Caco-2 (cell line): ENCODE measurements at regions of chr11 and their contacts with region 1.

Region 1: GRCh38 chr11:71563401-71563800 is 2.0 kb upstream of the KRTAP5-10 start:
- DNase-seq: peak; percentile 74 to 76
- H3K4me3 ChIP-seq: no peak overlapping the region
- H3K4me3 Mint-ChIP-seq: no peak overlapping the region
- H3K27ac Mint-ChIP-seq: no peak overlapping the region
- H3K4me1 ChIP-seq: no peaks in the 10 kb centered on the region
- H3K4me1 Mint-ChIP-seq: peaks cover 7% of the 10 kb centered on the region
- H3K27me3 ChIP-seq: no peaks in the 10 kb centered on the region
- H3K27me3 Mint-ChIP-seq: peaks cover 20% of the 10 kb centered on the region
- CTCF ChIP-seq: peak; percentile 81

Region 2: GRCh38 chr11:71425855-71426254 is 137.5 kb before region 1 on chr11:
- CTCF ChIA-PET with region 1: interaction called, 10 read pairs
- POLR2A ChIA-PET with region 1: no interaction called
- intact Hi-C with region 1: no loop called
- DNase-seq: no peak
- H3K4me3 ChIP-seq: no peak overlapping the region
- H3K4me3 Mint-ChIP-seq: no peak overlapping the region
- H3K27ac Mint-ChIP-seq: no peak overlapping the region
- H3K4me1 ChIP-seq: no peaks in the 10 kb centered on the region
- H3K4me1 Mint-ChIP-seq: no peaks in the 10 kb centered on the region
- H3K27me3 ChIP-seq: no peaks in the 10 kb centered on the region
- H3K27me3 Mint-ChIP-seq: peaks cover 3% of the 10 kb centered on the region
- CTCF ChIP-seq: no peak

Region 3: DNA sequence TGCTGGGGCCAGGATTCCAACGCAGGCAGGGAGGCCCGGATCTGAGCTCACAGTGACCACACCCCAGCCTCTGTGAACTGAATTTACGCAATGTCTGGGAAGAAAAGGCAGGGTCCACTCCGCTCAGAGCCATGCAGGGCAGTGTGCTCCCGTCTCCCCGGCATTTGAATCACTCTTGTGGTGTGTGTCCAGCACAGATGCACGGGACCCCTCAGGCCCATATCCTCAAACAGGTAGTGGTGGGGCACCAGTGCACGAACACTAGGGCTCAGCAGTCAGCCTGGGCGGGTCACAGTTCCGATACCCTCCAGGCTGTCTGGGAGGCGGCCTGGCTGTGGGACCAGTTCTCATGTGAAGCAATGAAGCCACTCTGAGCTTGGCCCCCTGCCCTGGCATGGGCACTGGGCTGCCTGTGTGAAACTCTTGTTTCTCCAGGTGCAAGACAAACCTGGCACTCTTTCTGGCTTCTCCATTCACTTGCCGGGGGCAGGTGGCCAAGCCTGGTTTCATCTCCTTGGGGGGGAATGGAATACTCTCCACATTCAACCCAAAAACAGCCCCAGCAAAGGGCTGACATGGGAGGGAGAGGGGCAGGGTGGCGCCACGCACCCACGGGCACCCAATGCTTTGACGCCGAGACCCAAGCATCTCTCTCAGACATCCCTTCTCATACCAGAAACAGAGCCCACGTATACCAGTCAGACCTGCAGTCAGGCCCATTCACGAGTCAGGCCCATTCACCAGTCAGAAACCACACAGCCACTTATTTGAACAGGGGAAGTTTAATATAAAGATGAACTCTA is 129.6 kb before region 1 on chr11:
- CTCF ChIA-PET with region 1: interaction called, 12 read pairs
- POLR2A ChIA-PET with region 1: no interaction called
- intact Hi-C with region 1: no loop called
- DNase-seq: peak; percentile 72 to 80
- H3K4me3 ChIP-seq: no peak overlapping the region
- H3K4me3 Mint-ChIP-seq: no peak overlapping the region
- H3K27ac Mint-ChIP-seq: peak overlapping the region; percentile 9
- H3K4me1 ChIP-seq: peaks cover 13% of the 10 kb centered on the region
- H3K4me1 Mint-ChIP-seq: peaks cover 17% of the 10 kb centered on the region
- H3K27me3 ChIP-seq: no peaks in the 10 kb centered on the region
- H3K27me3 Mint-ChIP-seq: no peaks in the 10 kb centered on the region
- CTCF ChIP-seq: no peak

Region 4: DNA sequence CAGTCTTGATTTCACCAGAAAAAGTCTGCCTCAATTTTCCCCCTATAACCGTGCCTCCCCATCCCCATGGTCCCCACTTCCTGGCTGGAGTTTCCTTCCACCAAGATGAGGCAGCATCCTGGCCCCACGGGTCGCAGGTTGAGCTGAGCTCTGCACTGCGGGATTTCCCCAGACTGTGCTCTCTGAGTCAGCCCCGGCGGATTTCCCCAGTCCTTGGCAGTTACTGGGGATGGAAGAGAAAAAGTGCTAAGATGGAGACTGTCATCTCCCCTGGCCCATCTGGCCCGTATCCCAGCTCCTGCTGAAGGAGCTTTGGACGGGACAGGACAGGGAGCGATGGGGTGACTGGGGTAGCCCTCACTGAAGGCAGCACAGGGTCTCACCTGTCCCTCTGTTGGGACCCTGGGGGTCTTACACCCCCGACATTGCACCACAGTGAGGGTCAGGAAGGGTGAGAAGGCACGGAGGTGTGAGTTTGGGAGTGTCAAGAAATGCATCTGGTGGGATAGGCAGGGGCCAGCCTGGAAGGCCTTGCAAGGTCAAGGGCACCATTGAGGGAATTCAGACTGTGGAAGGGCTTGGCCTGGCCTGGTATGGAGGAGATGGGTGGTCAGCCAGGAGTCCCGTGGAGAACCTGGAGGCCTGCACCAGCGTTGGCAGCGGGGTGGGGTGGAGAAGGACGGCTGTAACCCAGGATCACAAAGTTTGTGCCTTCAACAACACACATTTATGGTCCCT is 73.9 kb before region 1 on chr11:
- CTCF ChIA-PET with region 1: interaction called, 17 read pairs
- POLR2A ChIA-PET with region 1: no interaction called
- intact Hi-C with region 1: loop called (anchors 2 kb)
- DNase-seq: peak in 1 of 2 experiments; percentile 34
- H3K4me3 ChIP-seq: no peak overlapping the region
- H3K4me3 Mint-ChIP-seq: no peak overlapping the region
- H3K27ac Mint-ChIP-seq: peak overlapping the region; percentile 40
- H3K4me1 ChIP-seq: peaks cover 23% of the 10 kb centered on the region
- H3K4me1 Mint-ChIP-seq: peaks cover 21% of the 10 kb centered on the region
- H3K27me3 ChIP-seq: no peaks in the 10 kb centered on the region
- H3K27me3 Mint-ChIP-seq: no peaks in the 10 kb centered on the region
- CTCF ChIP-seq: no peak

Region 5: GRCh38 chr11:71580057-71581003 is 16.9 kb after region 1 on chr11:
- CTCF ChIA-PET with region 1: interaction called, 12 read pairs
- POLR2A ChIA-PET with region 1: no interaction called
- intact Hi-C with region 1: no loop called
- DNase-seq: peak; percentile 84 to 85
- H3K4me3 ChIP-seq: no peak overlapping the region
- H3K4me3 Mint-ChIP-seq: peak overlapping the region; percentile 33
- H3K27ac Mint-ChIP-seq: no peak overlapping the region
- H3K4me1 ChIP-seq: peaks cover 19% of the 10 kb centered on the region
- H3K4me1 Mint-ChIP-seq: peaks cover 7% of the 10 kb centered on the region
- H3K27me3 ChIP-seq: no peaks in the 10 kb centered on the region
- H3K27me3 Mint-ChIP-seq: peaks cover 2% of the 10 kb centered on the region
- CTCF ChIP-seq: peak; percentile 92 to 97

Region 6: GRCh38 chr11:71962428-71963038 is 399.1 kb after region 1 on chr11:
- CTCF ChIA-PET with region 1: no interaction called
- POLR2A ChIA-PET with region 1: no interaction called
- intact Hi-C with region 1: no loop called
- DNase-seq: no peak
- H3K4me3 ChIP-seq: no peak overlapping the region
- H3K4me3 Mint-ChIP-seq: no peak overlapping the region
- H3K27ac Mint-ChIP-seq: peak overlapping the region; percentile 40
- H3K4me1 ChIP-seq: peaks cover 5% of the 10 kb centered on the region; the same call in 1 of the 2 replicates
- H3K4me1 Mint-ChIP-seq: peaks cover 9% of the 10 kb centered on the region
- H3K27me3 ChIP-seq: no peaks in the 10 kb centered on the region
- H3K27me3 Mint-ChIP-seq: no peaks in the 10 kb centered on the region
- CTCF ChIP-seq: no peak